Left colon (tissue), 2 donors: ENCODE measurements at regions of chr11 and their contacts with region 1.

Region 1: DNA sequence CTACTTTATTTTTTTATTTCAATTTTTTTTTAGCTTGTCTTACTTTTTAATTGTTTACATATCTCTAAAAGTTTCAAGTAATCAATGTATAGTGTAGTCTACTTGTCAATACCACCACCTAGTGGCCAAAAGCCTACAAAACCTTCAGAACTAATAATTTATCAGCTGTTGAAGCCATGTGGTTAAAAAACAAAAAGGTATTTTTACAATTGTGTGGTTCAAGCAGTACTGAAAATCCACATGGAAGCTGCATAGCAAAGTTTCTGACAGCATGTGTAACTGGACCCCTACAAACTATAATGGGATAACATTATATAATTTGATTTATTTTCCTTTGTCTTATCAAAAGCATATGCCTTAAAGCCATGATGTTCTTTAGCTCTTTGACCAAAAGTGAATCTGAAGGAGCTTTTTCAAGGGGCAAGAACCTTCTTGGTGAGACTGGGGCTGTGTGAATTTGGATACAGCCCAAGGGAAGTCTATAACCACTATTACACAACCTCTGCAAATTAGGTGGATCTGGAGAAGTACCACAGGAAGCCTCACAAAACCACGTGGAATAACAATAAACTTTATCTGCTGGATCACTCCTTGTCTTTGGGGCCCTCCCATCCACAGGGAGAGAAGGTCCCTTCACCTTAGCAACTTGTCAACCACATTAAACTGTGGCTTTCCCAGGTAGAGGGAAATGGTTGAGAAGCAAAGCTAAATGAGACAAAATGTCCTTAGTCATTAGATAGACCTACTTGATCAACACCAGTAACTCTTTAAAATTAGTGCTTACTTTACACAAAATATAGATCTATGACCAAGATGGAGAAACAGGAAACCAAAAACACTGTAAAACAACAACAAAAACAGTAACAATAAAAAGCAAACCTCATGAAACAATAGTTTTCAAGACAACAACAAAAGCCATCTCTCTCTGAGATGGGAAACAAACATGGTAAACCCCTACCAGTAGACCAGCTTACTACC is 9.9 kb downstream of the NARS2 start:
- DNase-seq: peak in 1 of 2 donors; percentile 34
- ATAC-seq: peak; percentile 49

Region 2: GRCh38 chr11:78139422-78140391 is 425.1 kb before region 1 on chr11 and contains the start of gene ALG8:
- intact Hi-C with region 1: loop called in 1 of 2 experiments (anchors 10 kb)
- DNase-seq: peak; percentile 94 to 98
- ATAC-seq: peak; percentile 99
- total RNA-seq, gene ALG8: 22.1 to 29.0 TPM

Region 3: DNA sequence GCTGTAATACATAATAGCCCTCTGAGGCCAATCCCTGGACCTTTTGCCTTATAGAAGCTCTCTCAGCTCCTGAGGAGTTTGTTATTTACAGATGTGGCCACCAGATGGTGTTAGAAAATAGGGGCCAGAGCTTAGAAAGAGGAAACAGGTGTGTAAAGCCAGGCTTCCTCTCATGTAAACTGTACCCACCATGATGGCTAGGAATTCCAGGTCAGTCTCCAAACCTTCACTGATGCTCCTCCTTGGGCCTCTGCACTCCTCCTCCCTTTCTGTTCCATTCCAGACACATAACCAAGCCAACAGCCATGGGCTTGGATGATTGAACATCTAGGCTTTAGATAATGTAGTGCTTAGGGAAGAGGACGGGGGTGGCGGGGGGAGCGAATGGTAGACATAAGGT is 336.3 kb before region 1 on chr11:
- intact Hi-C with region 1: loop called in 1 of 2 experiments (anchors 10 kb)
- DNase-seq: no peak
- ATAC-seq: peak; percentile 94